Breast epithelium (tissue), 4 donors: ENCODE measurements at regions of chr3 and their contacts with region 1.

Region 1: DNA sequence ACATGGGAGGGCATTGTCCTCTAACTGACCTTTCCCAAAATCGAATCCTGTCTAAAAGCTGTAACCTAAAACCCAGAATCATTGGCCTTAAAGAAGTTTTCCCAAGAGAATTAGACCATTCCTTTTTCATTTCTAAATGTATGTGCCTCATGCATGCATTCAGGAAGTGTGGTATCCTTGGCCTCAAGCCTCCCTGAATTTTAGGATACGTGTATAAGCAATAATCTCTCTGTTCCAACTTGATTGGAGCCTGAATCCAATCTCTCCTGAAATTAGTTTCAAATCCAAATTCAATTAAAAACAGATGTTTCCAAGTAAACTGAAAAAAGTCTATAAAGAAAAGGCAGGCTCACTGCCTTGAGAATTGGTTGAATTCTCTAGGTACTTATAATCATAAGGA is 86.0 kb upstream of the VEPH1 start:
- DNase-seq: no peak
- H3K4me3 ChIP-seq: no peak overlapping the region
- H3K27ac ChIP-seq: peak overlapping the region in 1 of 2 donors; percentile 12
- H3K4me1 ChIP-seq: no peaks in the 10 kb centered on the region
- H3K27me3 ChIP-seq: no peaks in the 10 kb centered on the region
- CTCF ChIP-seq: no peak
- POLR2A ChIP-seq: no peak

Region 2: GRCh38 chr3:157347577-157348303 is 241.5 kb before region 1 on chr3:
- intact Hi-C with region 1: no loop called
- DNase-seq: no peak
- H3K4me3 ChIP-seq: no peak overlapping the region
- H3K27ac ChIP-seq: no peak overlapping the region
- H3K4me1 ChIP-seq: no peaks in the 10 kb centered on the region
- H3K27me3 ChIP-seq: no peaks in the 10 kb centered on the region
- CTCF ChIP-seq: no peak
- POLR2A ChIP-seq: no peak

Region 3: DNA sequence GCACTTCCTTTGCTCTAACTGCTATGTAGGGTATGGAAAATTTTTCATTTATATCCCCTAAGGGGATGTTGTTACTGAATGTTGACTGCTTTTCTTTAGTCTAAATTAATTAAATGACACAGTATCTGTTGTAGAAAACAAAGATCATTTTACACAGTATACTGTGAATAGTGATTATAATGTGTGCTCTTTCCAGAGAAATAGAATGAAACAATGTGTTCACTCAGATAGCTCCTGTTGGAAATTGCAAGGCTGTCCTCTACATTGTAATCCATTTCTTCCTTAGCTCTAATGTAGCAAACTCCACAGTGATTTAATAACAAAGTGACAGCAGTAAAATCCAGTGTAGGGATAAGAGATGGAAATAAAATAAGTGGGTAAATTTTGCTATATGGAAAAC is 73.0 kb after region 1 on chr3:
- intact Hi-C with region 1: loop called (anchors 2 kb)
- DNase-seq: no peak
- H3K4me3 ChIP-seq: no peak overlapping the region
- H3K27ac ChIP-seq: no peak overlapping the region
- H3K4me1 ChIP-seq: no peaks in the 10 kb centered on the region
- H3K27me3 ChIP-seq: no peaks in the 10 kb centered on the region
- CTCF ChIP-seq: no peak
- POLR2A ChIP-seq: no peak